HepG2 (cell line): ENCODE measurements at regions of chr10 and their contacts with region 1.

Region 1: GRCh38 chr10:15344876-15345285 is 26.2 kb downstream of the FAM171A1 start:
- DNase-seq: peak; percentile 98
- ATAC-seq: peak; percentile 91
- H3K4me3 ChIP-seq: peak overlapping the region in 2 of 3 experiments; percentile 41 to 48; a peak in 3 of 6 replicates
- H3K27ac ChIP-seq: peak overlapping the region; percentile 95
- H3K4me1 ChIP-seq: peaks cover 100% of the 10 kb centered on the region
- H3K27me3 ChIP-seq: no peaks in the 10 kb centered on the region
- CTCF ChIP-seq: no peak
- EP300 ChIP-seq: peak; percentile 82 to 94
- POLR2A ChIP-seq: no peak
- RAD21 ChIP-seq: no peak

Region 2: DNA sequence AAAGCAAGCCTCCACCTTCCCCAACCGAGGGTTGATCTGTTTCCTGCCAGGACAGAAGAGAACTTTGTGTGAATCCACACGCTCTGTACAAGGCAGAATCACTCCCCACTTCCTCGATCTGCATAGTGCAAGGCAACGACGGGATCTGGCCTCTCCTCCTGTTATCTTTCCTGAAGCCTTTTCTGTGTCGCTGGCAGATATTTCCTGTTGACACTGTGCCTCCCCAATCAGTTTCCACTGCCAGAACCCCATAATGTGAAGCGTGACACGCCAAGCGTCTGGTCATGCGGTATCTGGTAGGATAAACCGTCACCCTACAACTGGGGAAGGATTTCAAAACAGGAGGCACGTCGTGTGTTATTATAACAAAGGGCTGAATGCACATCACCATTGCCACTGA is 31.0 kb before region 1 on chr10:
- CTCF ChIA-PET with region 1: no interaction called
- POLR2A ChIA-PET with region 1: no interaction called
- in situ Hi-C with region 1: no loop called
- intact Hi-C with region 1: no loop called
- DNase-seq: no peak
- ATAC-seq: no peak
- H3K4me3 ChIP-seq: no peak overlapping the region
- H3K27ac ChIP-seq: no peak overlapping the region
- H3K4me1 ChIP-seq: peaks cover 21% of the 10 kb centered on the region
- H3K27me3 ChIP-seq: no peaks in the 10 kb centered on the region
- CTCF ChIP-seq: no peak
- EP300 ChIP-seq: no peak
- POLR2A ChIP-seq: no peak
- RAD21 ChIP-seq: no peak

Region 3: DNA sequence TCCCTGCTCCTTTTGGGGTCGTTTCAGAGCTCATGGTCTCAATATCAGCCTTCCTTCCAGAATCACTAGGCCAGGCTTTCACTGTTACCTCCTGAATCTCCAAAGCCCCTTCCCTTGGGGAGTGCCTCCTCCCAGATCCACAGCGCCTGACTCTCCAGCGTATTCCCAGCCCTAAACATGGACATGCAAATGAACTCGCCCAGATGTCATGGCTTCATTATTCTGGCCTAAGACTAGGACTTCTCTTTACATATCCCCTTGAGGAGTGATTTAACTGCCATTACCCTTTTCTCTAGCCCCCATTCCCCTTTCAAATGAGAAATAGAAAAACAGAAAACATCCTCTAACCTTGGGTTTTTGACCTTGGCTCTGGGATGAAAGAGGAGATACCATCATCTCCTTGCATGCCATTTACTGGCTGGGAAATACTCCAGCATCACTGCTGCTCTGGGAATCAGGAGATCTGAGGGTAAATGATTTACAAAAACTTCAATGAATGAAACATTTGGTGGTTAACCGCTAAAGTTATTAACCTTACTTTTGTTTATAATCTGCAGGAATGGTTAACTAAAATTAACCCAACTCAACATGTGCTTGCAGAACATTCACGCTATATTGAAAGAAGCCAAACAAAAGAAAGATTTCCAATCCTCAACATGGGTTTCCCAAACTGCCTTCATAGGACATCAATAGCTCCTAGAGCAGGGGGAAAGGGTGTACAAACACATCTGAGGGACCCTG is 10.8 kb before region 1 on chr10:
- CTCF ChIA-PET with region 1: no interaction called
- POLR2A ChIA-PET with region 1: interaction called, 30 read pairs
- in situ Hi-C with region 1: no loop called
- intact Hi-C with region 1: loop called (anchors 1 kb)
- DNase-seq: peak; percentile 96
- ATAC-seq: peak; percentile 87
- H3K4me3 ChIP-seq: peak overlapping the region in 2 of 3 experiments; percentile 15 to 49; a peak in 2 of 6 replicates
- H3K27ac ChIP-seq: peak overlapping the region; percentile 96
- H3K4me1 ChIP-seq: peaks cover 94% of the 10 kb centered on the region
- H3K27me3 ChIP-seq: no peaks in the 10 kb centered on the region
- CTCF ChIP-seq: no peak
- EP300 ChIP-seq: peak in 1 of 2 experiments; percentile 87; a peak in 2 of 4 replicates
- POLR2A ChIP-seq: peak; percentile 6 to 12; a peak in 2 of 4 replicates
- RAD21 ChIP-seq: no peak